Panc1 (cell line): ENCODE measurements at regions of chr10 and their contacts with region 1.

Region 1: GRCh38 chr10:103139803-103140202 is 53.3 kb downstream of the NT5C2 start:
- DNase-seq: no peak
- ATAC-seq: peak; percentile 72; the same call in 1 of the 2 replicates
- H3K4me3 ChIP-seq: no peak overlapping the region
- H3K27ac ChIP-seq: no peak overlapping the region
- H3K4me1 ChIP-seq: peaks cover 9% of the 10 kb centered on the region; the same call in 1 of the 2 replicates
- H3K27me3 ChIP-seq: no peaks in the 10 kb centered on the region
- CTCF ChIP-seq: no peak

Region 2: GRCh38 chr10:103104721-103105120 is 35.1 kb before region 1 on chr10:
- CTCF ChIA-PET with region 1: no interaction called
- POLR2A ChIA-PET with region 1: no interaction called
- in situ Hi-C with region 1: loop called (anchors 5 kb)
- intact Hi-C with region 1: no loop called
- DNase-seq: no peak
- ATAC-seq: no peak
- H3K4me3 ChIP-seq: no peak overlapping the region
- H3K27ac ChIP-seq: no peak overlapping the region
- H3K4me1 ChIP-seq: no peaks in the 10 kb centered on the region; the same call in 1 of the 2 replicates
- H3K27me3 ChIP-seq: no peaks in the 10 kb centered on the region
- CTCF ChIP-seq: no peak

Region 3: GRCh38 chr10:103125323-103126267 is 14.2 kb before region 1 on chr10:
- CTCF ChIA-PET with region 1: no interaction called
- POLR2A ChIA-PET with region 1: interaction called, 12 read pairs
- in situ Hi-C with region 1: no loop called
- intact Hi-C with region 1: no loop called
- DNase-seq: no peak
- ATAC-seq: no peak
- H3K4me3 ChIP-seq: no peak overlapping the region
- H3K27ac ChIP-seq: no peak overlapping the region; the same call in 1 of the 2 replicates
- H3K4me1 ChIP-seq: peaks cover 42% of the 10 kb centered on the region
- H3K27me3 ChIP-seq: no peaks in the 10 kb centered on the region
- CTCF ChIP-seq: no peak